ENCODE measurements at regions of chr2 and their contacts with region 1.

Region 1: DNA sequence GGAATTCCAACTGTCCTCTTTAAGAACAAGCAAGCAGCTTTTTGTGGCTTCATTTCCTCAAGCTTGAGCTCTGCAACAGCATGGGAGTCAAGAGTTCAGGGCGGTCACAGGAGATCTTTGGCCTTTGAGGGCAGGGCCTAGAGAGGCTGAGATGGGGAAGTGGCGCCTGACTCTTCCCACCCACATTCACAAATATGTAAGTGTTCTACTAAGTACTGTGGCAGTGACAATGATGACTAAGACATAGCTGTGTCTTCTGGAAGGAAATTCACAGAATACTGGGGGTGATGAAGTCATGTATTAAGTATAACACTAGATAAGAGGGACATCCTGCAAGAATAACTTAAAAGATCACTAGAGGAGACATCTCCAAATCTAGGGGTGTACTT is 15.0 kb downstream of the RND3 start:
- DNase-seq: peak; percentile 60
- H3K4me3 Mint-ChIP-seq: peak overlapping the region; percentile 94
- H3K27ac Mint-ChIP-seq: peak overlapping the region; percentile 94
- H3K4me1 Mint-ChIP-seq: peaks cover 87% of the 10 kb centered on the region
- H3K27me3 Mint-ChIP-seq: no peaks in the 10 kb centered on the region
- CTCF ChIP-seq: no peak

Region 2: DNA sequence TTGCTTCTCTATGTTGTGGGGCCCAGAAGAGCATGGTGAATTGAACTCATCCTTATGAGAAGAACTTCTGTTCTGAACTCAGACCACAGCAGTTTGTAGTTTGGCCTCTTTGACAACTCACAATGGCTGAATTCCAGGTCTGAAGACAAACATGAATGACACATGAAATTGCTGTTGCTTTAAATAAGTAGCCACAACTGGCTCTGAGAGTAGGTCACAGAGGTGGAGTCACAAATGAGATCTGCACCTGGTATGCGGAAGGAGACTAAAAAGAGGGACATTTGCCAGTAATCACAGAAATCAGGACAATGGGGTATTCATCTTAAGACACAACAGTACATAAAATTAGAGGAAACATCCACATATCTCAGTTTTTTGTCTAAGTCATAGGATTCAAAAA is 594.6 kb before region 1 on chr2:
- CTCF ChIA-PET with region 1: no interaction called
- intact Hi-C with region 1: loop called (anchors 5 kb)
- DNase-seq: peak; percentile 60
- H3K4me3 Mint-ChIP-seq: peak overlapping the region; percentile 23
- H3K27ac Mint-ChIP-seq: peak overlapping the region; percentile 92
- H3K4me1 Mint-ChIP-seq: peaks cover 40% of the 10 kb centered on the region
- H3K27me3 Mint-ChIP-seq: no peaks in the 10 kb centered on the region
- CTCF ChIP-seq: no peak

Region 3: GRCh38 chr2:150410809-150411208 is 61.7 kb before region 1 on chr2:
- CTCF ChIA-PET with region 1: no interaction called
- intact Hi-C with region 1: loop called (anchors 5 kb)
- DNase-seq: peak; percentile 15
- H3K4me3 Mint-ChIP-seq: no peak overlapping the region
- H3K27ac Mint-ChIP-seq: peak overlapping the region; percentile 30
- H3K4me1 Mint-ChIP-seq: peaks cover 50% of the 10 kb centered on the region
- H3K27me3 Mint-ChIP-seq: no peaks in the 10 kb centered on the region
- CTCF ChIP-seq: no peak

Region 4: GRCh38 chr2:150425121-150425955 is 47.2 kb before region 1 on chr2:
- CTCF ChIA-PET with region 1: no interaction called
- intact Hi-C with region 1: no loop called
- DNase-seq: no peak
- H3K4me3 Mint-ChIP-seq: no peak overlapping the region
- H3K27ac Mint-ChIP-seq: no peak overlapping the region
- H3K4me1 Mint-ChIP-seq: peaks cover 13% of the 10 kb centered on the region
- H3K27me3 Mint-ChIP-seq: no peaks in the 10 kb centered on the region
- CTCF ChIP-seq: no peak

Region 5: DNA sequence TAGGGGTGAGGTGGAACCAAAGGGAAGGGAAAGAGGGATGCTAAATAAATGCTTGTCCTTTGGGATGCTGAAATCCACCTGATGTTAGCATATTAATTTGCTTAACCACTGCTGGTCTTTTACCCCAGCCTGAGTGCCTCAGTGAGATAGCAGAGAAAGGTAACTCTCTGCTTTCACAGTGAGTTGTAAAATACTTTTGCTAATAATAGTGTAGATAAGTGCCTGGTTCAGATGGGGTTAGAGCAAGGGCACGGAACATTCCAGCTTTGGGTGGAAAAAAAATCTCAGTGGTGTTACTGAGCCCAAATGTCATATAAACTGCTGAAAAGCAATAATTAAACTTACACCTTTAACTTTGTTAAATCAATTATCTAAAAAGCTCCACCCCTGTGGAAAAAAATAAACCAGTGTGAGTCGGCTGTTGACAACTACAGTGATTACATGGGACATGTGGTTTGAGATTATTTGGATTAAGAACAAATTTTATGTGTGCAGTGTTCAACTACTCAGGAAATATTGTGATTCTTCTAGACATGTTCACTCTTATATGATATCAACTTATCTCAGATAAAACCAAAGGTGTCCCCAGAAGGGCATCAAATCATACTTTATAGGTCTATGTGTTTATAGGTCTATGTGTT is 36.1 kb after region 1 on chr2:
- CTCF ChIA-PET with region 1: no interaction called
- intact Hi-C with region 1: no loop called
- DNase-seq: no peak
- H3K4me3 Mint-ChIP-seq: no peak overlapping the region
- H3K27ac Mint-ChIP-seq: no peak overlapping the region
- H3K4me1 Mint-ChIP-seq: peaks cover 8% of the 10 kb centered on the region
- H3K27me3 Mint-ChIP-seq: no peaks in the 10 kb centered on the region
- CTCF ChIP-seq: no peak

Region 6: DNA sequence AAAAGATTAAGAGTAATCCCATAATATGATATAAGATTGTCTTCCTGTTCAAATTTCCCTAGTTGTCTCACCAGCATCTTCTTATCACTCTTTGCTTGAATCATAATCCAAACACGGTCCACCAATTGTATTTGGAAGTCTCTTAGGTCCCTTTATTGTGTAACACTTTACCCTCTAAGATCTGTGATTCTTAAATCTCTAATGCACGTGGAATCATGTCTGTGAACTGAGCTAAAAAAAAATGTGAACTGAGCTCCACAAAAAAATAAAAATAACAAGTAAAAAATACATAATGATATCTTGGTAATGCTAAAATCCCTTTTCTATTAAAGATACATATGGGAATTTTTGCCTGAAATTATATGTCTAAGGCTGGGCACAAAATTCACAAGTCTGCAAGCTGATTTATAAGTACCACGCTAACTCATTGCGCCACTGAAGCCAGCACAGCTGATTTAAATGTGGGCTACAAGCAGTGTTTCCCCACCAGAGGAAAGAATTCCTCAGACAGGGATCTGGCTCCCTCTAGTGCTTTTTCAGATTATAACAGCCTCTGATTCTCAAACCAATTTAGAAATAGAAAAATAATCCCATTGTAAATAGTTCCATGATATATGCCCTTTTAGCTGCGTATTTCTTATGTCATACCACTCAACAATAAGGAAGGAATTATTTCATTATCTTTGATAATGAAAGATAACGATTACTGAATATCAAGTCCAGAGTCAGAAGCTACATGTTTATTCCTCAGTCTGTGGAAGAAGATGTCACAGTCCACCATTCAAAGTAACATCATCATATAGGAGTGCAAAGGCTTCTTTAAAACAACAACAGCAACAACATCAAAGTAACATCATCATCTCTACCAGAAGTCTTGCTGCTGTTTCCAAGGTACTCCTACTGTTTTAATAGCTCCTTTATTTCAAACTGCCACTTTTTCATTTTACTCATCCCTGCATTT is 766.3 kb after region 1 on chr2:
- CTCF ChIA-PET with region 1: no interaction called
- intact Hi-C with region 1: loop called (anchors 5 kb)
- DNase-seq: peak; percentile 63
- H3K4me3 Mint-ChIP-seq: no peak overlapping the region
- H3K27ac Mint-ChIP-seq: no peak overlapping the region
- H3K4me1 Mint-ChIP-seq: no peaks in the 10 kb centered on the region
- H3K27me3 Mint-ChIP-seq: no peaks in the 10 kb centered on the region
- CTCF ChIP-seq: peak; percentile 70

Measured in Calu3 (cell line).